Dorsolateral prefrontal cortex (tissue), 120 donors: ENCODE measurements at regions of chr6 and their contacts with region 1.

Region 1: DNA sequence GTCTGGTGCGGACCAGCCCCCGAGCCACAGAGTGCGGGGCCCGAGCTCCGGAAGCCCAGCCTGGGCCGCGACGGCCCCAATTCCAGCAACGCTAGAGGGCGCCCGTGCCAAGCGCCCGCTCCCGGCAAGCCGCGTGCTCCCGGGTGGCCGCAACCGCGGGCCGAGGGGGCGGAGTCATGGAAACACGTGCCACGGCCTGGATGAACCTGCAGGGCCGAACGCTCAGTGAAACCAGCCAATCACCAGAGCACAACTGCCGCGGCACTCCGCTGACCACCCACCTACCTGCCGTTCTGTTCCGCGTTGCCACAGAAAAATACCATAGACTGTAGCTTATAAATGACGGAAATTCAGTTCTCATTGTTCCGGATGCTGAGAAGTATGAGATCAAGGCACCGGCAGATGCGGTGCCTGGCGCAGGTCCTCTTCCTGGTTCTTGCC is 85.7 kb upstream of the FOXC1 start:
- DNase-seq: peak in 7 of 10 donors; percentile 26 to 68 (median 60)
- H3K4me3 ChIP-seq: peak overlapping the region in 52 of 59 donors; percentile 1 to 55 (median 36)
- H3K27ac ChIP-seq: no peak overlapping the region
- H3K27me3 ChIP-seq: peaks cover 0 to 8% (median 0%) of the 10 kb centered on the region in 45 donors
- CTCF ChIP-seq: peak in 54 of 56 donors; percentile 42 to 81 (median 66)

Region 2: DNA sequence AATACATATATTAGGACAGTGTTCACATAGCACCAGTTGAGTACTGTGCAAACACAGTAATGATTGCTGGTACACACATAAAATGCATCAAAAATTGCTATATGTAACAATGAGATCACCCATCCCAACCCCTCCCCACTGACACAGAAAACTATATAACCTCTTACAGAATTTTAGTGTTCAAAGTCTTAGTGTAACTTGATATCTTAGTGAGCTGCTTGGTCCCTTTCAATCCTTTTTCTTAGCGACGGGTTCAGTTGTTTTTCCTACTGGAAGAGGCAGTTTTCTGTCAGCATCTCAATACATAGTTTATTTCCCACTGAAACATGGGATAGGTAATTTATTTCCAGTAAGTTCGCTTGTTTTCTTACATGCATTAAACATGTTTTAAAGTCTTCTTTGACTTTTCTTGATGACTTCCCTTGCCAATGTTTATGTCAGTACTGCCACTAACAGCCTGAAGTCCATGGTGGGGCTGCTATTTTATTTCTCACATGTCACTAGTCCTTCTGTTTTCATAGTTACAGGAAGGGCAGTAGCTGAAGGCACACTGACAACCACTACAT is 10.8 kb before region 1 on chr6:
- intact Hi-C with region 1: no loop called
- DNase-seq: no peak
- H3K4me3 ChIP-seq: no peak overlapping the region
- H3K27ac ChIP-seq: no peak overlapping the region
- H3K27me3 ChIP-seq: peaks cover 0 to 3% (median 0%) of the 10 kb centered on the region in 45 donors
- CTCF ChIP-seq: no peak

Region 3: GRCh38 chr6:1552296-1552761 is 28.3 kb after region 1 on chr6:
- intact Hi-C with region 1: loop called in 1 of 2 experiments (anchors 2 kb)
- DNase-seq: no peak
- H3K4me3 ChIP-seq: no peak overlapping the region
- H3K27ac ChIP-seq: no peak overlapping the region
- H3K27me3 ChIP-seq: peaks cover 0 to 4% (median 0%) of the 10 kb centered on the region in 45 donors
- CTCF ChIP-seq: peak in 50 of 56 donors; percentile 14 to 61 (median 39)

Region 4: GRCh38 chr6:1581120-1581991 is 57.3 kb after region 1 on chr6:
- intact Hi-C with region 1: loop called in 1 of 2 experiments (anchors 5 kb)
- DNase-seq: peak in 1 of 10 donors; percentile 54
- H3K4me3 ChIP-seq: peak overlapping the region in 3 of 59 donors; percentile 1 to 21 (median 13)
- H3K27ac ChIP-seq: peak overlapping the region in 29 of 59 donors; percentile 17 to 83 (median 61)
- H3K27me3 ChIP-seq: no peaks in the 10 kb centered on the region
- CTCF ChIP-seq: peak in 3 of 56 donors; percentile 9 to 22 (median 10)